SK-N-SH (cell line): ENCODE measurements at regions of chr1 and their contacts with region 1.

Region 1: DNA sequence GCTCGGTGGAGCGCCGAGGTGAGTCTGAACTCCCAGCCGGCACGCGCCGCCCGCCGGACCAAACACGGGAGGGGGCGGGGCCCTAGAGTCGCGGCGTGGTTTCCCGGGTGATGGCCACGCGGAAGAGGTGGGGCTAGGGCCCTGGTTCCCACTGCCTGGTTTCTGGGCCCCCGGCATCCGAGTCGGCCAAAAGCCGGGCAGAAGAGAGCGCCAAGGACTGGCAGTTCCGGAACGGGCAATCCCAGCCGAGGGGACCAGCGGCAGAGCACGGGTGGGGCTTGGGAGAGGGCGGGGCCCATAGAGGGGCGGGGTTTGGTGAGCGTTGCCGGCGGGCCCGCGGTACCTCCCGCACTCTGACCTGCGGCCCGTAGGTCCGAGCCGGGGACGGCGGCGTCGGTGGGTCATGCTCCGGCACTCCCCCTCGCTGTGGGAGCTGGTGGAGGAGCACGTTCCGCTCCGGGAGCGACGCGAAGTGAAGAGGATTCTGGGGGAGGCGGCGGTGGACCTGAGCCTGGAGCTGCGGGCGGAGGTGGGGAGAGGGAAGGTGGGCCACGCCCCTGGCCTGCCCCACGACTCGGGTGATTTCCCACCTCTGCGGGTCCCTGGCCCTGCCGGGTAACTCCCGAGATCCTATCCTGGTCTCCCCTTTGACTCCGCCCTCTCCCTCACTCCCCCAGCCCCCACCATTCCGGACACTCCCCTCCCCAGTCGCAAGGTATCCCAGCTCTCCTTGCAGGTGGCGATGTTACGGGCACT is at the start of gene CCDC24:
- DNase-seq: peak; percentile 91
- H3K4me3 ChIP-seq: peak within 1 kb of the TSS; percentile 71 to 75
- H3K27ac ChIP-seq: peak within 1 kb of the TSS; percentile 75 to 86
- H3K4me1 ChIP-seq: peaks cover 8 to 41% of the 10 kb centered on the region in 2 experiments; a peak in 3 of 4 replicates
- H3K27me3 ChIP-seq: no peaks in the 10 kb centered on the region
- CTCF ChIP-seq: no peak
- EP300 ChIP-seq: no peak
- RAD21 ChIP-seq: no peak
- polyA plus RNA-seq, gene CCDC24: 7.5 and 11.8 TPM in 2 replicates

Region 2: GRCh38 chr1:43444836-43445235 is 546.8 kb before region 1 on chr1:
- CTCF ChIA-PET with region 1: no interaction called
- POLR2A ChIA-PET with region 1: no interaction called
- DNase-seq: no peak
- H3K4me3 ChIP-seq: no peak overlapping the region
- H3K27ac ChIP-seq: no peak overlapping the region
- H3K4me1 ChIP-seq: no peaks in the 10 kb centered on the region; a peak in 1 of 4 replicates
- H3K27me3 ChIP-seq: no peaks in the 10 kb centered on the region
- CTCF ChIP-seq: no peak
- EP300 ChIP-seq: no peak
- RAD21 ChIP-seq: no peak

Region 3: DNA sequence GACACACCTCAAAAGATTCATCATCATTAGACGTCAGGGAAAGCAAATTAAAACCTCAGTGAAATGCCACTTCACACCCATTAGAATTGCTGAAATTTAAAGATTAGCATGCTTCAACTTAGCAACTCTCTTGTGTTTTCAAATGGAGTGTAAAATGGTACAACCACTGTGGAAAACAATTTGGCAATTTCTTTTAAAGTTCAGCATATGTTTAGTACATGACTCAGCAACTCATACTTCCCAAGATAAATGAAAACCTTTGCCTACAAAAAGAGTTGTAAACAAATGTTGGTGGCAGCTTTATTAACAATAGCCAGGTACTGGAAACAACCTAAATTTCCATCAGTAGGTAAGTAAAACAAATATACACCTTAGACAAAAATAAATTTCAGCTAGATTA is 241.6 kb before region 1 on chr1:
- CTCF ChIA-PET with region 1: no interaction called
- POLR2A ChIA-PET with region 1: no interaction called
- DNase-seq: no peak
- H3K4me3 ChIP-seq: no peak overlapping the region
- H3K27ac ChIP-seq: no peak overlapping the region
- H3K4me1 ChIP-seq: no peaks in the 10 kb centered on the region
- H3K27me3 ChIP-seq: no peaks in the 10 kb centered on the region
- CTCF ChIP-seq: no peak
- EP300 ChIP-seq: no peak
- RAD21 ChIP-seq: no peak

Region 4: GRCh38 chr1:43974443-43975248 is 17.0 kb before region 1 on chr1 and contains the start of gene ATP6V0B:
- CTCF ChIA-PET with region 1: interaction called, 15 read pairs
- POLR2A ChIA-PET with region 1: interaction called, 5 read pairs
- DNase-seq: peak; percentile 96
- H3K4me3 ChIP-seq: peak within 1 kb of the TSS; percentile 83 to 91
- H3K27ac ChIP-seq: peak within 1 kb of the TSS; percentile 66 to 93; a peak in 3 of 4 replicates
- H3K4me1 ChIP-seq: peaks cover 8 to 47% of the 10 kb centered on the region in 2 experiments; a peak in 1 of 4 replicates
- H3K27me3 ChIP-seq: no peaks in the 10 kb centered on the region
- CTCF ChIP-seq: no peak
- EP300 ChIP-seq: no peak
- RAD21 ChIP-seq: no peak
- polyA plus RNA-seq, gene ATP6V0B: 180 and 191 TPM in 2 replicates

Region 5: GRCh38 chr1:43979528-43980254 is 12.0 kb before region 1 on chr1:
- CTCF ChIA-PET with region 1: interaction called, 15 read pairs
- POLR2A ChIA-PET with region 1: interaction called, 5 read pairs
- DNase-seq: peak; percentile 89
- H3K4me3 ChIP-seq: peak overlapping the region; percentile 59 to 71
- H3K27ac ChIP-seq: peak overlapping the region; percentile 37 to 74
- H3K4me1 ChIP-seq: peaks cover 5 to 42% of the 10 kb centered on the region in 2 experiments; a peak in 1 of 4 replicates
- H3K27me3 ChIP-seq: no peaks in the 10 kb centered on the region
- CTCF ChIP-seq: no peak
- EP300 ChIP-seq: no peak
- RAD21 ChIP-seq: 0 out of 2 replicates have a peak, but pooled peaks have one; percentile 18

Region 6: DNA sequence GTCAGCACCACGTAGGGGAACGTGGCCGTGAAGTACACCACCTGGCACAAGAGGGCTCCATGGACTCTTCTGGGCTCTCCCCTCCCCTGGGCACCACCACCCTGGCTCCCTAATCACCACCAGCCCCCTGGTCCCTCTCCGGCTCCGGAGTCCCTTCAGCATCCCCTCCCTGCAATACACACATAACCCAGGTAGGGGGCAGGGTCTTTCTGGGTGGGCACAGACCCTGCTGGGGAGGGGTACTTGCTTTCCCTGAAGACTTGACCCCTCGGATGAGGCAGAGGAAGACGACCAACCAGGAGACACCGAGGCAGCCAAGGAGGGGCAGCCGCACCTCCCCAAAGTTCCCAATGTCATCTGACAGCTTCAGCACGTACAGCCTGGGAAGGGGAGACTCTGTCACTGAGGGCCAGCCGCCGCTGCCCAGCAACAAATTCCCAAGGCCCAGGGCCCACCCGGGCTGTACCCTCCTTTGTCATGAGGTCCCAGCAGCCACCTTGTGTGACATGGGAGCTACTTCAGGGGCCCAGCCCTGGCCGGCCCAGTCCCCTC is 11.0 kb after region 1 on chr1:
- CTCF ChIA-PET with region 1: interaction called, 23 read pairs
- POLR2A ChIA-PET with region 1: interaction called, 3 read pairs
- DNase-seq: peak; percentile 59
- H3K4me3 ChIP-seq: no peak overlapping the region
- H3K27ac ChIP-seq: no peak overlapping the region
- H3K4me1 ChIP-seq: peaks cover 0 to 31% of the 10 kb centered on the region in 2 experiments; a peak in 2 of 4 replicates
- H3K27me3 ChIP-seq: no peaks in the 10 kb centered on the region
- CTCF ChIP-seq: peak; percentile 30
- EP300 ChIP-seq: no peak
- RAD21 ChIP-seq: no peak

Region 7: DNA sequence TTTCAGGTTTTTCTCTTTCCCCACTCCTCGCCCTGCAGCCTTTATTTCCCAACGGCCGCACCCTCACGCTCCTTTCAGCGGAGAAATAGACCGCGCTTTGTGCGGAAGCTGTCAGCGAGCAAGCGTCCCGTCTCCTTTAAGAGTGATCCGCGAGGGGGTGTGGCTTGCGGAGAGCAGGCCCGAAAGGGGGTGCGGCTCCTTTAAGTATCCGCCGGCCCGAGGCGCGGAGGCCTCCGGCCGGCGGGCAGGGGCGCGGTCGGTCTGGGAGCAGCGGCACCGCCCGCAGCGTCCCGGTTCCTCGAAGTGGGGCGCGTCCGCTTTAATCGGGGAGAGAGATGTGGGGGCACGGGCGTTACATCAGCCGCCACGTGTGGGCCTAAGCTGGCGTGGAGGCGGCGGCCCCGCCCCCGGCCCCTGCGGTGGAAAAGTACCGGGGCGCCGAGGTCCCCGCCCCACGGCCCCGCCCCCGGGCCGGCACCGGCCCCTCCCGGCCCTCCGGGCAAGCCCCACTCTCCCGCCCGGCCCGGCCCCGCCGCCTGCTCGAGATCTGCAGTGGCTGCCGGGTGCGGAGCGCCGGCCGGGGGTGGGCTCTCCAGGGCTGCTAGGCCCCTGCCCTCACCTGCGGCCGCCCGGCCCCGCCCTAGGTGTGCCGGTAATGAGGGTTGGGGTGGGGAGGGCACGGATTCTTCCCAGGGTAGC is 38.4 kb after region 1 on chr1:
- CTCF ChIA-PET with region 1: interaction called, 598 read pairs
- POLR2A ChIA-PET with region 1: interaction called, 4 read pairs
- DNase-seq: peak; percentile 88
- H3K4me3 ChIP-seq: peak overlapping the region; percentile 82 to 93
- H3K27ac ChIP-seq: peak overlapping the region; percentile 74 to 87
- H3K4me1 ChIP-seq: peaks cover 11 to 25% of the 10 kb centered on the region in 2 experiments; a peak in 2 of 4 replicates
- H3K27me3 ChIP-seq: no peaks in the 10 kb centered on the region
- CTCF ChIP-seq: no peak
- EP300 ChIP-seq: no peak
- RAD21 ChIP-seq: no peak